Body of pancreas (tissue), 4 donors: ENCODE measurements at regions of chr12 and their contacts with region 1.

Region 1: GRCh38 chr12:94553130-94553519 is 93.5 kb upstream of the CEP83 start:
- DNase-seq: no peak
- ATAC-seq: no peak
- H3K4me3 ChIP-seq: no peak overlapping the region
- H3K27ac ChIP-seq: no peak overlapping the region
- H3K4me1 ChIP-seq: peaks cover 4% of the 10 kb centered on the region
- H3K27me3 ChIP-seq: no peaks in the 10 kb centered on the region
- CTCF ChIP-seq: no peak
- POLR2A ChIP-seq: no peak

Region 2: DNA sequence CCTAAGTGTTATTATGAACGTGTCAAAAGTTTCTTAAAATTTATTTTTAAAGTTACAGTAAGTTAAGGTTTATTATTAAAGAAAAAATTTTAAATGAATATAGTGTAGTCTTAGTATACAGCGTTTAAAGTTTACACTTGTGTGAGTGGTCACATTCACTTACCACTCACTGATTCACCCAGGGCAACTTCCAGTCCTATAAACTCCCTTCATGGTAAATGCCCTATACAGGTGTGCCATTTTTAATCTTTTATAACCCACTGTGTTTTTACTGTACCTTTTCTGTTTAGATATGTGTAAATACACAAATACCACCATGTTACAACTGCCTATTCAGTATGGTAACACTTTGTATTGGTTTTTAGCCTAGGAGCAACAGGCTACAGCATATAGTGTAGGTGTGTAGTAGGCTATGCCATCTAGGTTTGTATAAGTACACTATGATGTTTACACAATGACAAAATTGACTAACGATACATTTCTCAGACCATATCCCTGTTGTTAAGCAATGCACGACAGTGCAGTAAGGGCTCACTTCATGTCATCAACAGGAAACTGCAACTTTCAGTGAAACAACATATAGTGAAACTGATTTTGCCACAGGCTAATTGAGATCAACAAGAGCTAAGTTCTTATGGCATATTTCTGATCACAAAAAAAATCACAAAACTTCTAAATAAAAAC is 209.3 kb after region 1 on chr12:
- intact Hi-C with region 1: loop called (anchors 10 kb)
- DNase-seq: no peak
- ATAC-seq: no peak
- H3K4me3 ChIP-seq: no peak overlapping the region
- H3K27ac ChIP-seq: no peak overlapping the region
- H3K4me1 ChIP-seq: no peaks in the 10 kb centered on the region
- H3K27me3 ChIP-seq: no peaks in the 10 kb centered on the region
- CTCF ChIP-seq: no peak
- POLR2A ChIP-seq: no peak